GM12878 (cell line): ENCODE measurements at regions of chr3 and their contacts with region 1.

Region 1: DNA sequence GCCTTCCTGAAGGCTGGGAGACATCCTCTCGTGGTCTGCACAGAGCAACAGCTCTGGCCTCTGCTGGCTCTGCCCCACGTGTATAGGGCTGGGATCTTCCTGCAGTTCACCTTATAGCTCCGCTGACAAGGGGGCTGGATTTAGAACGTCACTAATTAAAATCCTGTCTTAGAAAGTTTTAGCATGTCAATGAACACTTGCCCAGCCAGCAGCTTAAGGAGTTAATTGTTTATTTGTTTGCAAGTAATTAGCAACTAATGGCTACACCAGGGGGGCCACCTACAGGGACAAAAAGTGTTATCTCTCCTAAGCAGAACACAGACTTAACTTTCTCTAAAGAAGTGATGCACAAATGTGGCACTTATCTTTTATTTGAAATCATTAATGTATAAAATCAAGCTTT is at the start of gene HESX1:
- DNase-seq: no peak
- ATAC-seq: peak; percentile 25; the same call in 1 of the 3 replicates
- H3K4me3 ChIP-seq: no peak within 1 kb of the TSS
- H3K27ac ChIP-seq: no peak within 1 kb of the TSS
- H3K4me1 ChIP-seq: no peaks in the 10 kb centered on the region
- H3K27me3 ChIP-seq: no peaks in the 10 kb centered on the region
- CTCF ChIP-seq: no peak
- EP300 ChIP-seq: no peak
- POLR2A ChIP-seq: no peak
- RAD21 ChIP-seq: no peak
- polyA plus RNA-seq, gene HESX1: 4.2 to 5.9 TPM

Region 2: GRCh38 chr3:57184526-57184925 is 15.4 kb before region 1 on chr3:
- CTCF ChIA-PET with region 1: interaction called, 5 read pairs
- POLR2A ChIA-PET with region 1: no interaction called
- RAD21 ChIA-PET with region 1: interaction called, 4 read pairs
- SMC1A ChIA-PET with region 1: interaction called, 10 read pairs
- in situ Hi-C with region 1: no loop called
- intact Hi-C with region 1: no loop called
- DNase-seq: no peak
- ATAC-seq: no peak
- H3K4me3 ChIP-seq: no peak overlapping the region
- H3K27ac ChIP-seq: no peak overlapping the region
- H3K4me1 ChIP-seq: no peaks in the 10 kb centered on the region
- H3K27me3 ChIP-seq: no peaks in the 10 kb centered on the region
- CTCF ChIP-seq: no peak
- EP300 ChIP-seq: no peak
- POLR2A ChIP-seq: no peak
- RAD21 ChIP-seq: no peak

Region 3: DNA sequence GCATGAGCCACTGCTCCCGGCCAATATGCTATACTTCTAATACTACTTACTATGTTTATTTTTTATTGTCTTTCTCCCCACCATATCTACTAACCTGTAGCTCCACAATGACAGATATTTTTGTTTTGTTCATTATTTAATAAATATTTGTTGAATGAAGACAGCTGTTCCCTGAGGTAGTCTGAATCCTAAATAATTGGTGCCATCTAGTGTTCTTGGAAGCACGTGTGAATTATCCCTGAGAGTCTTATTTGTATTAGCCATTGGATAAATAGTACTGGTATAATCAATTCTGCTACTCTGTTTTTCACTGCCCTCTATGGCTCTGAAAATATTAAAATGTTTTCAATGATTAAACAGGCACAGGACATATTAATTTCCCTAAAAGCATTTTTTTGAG is 22.0 kb after region 1 on chr3:
- CTCF ChIA-PET with region 1: interaction called, 4 read pairs
- POLR2A ChIA-PET with region 1: interaction called, 7 read pairs
- RAD21 ChIA-PET with region 1: interaction called, 13 read pairs
- SMC1A ChIA-PET with region 1: interaction called, 26 read pairs
- in situ Hi-C with region 1: no loop called
- intact Hi-C with region 1: no loop called
- DNase-seq: no peak
- ATAC-seq: no peak
- H3K4me3 ChIP-seq: no peak overlapping the region
- H3K27ac ChIP-seq: no peak overlapping the region
- H3K4me1 ChIP-seq: peaks cover 12% of the 10 kb centered on the region
- H3K27me3 ChIP-seq: no peaks in the 10 kb centered on the region
- CTCF ChIP-seq: peak in 1 of 3 experiments; percentile 19; a peak in 1 of 6 replicates
- EP300 ChIP-seq: no peak
- POLR2A ChIP-seq: no peak
- RAD21 ChIP-seq: 0 out of 2 replicates have a peak, but pooled peaks have one; percentile 1

Region 4: DNA sequence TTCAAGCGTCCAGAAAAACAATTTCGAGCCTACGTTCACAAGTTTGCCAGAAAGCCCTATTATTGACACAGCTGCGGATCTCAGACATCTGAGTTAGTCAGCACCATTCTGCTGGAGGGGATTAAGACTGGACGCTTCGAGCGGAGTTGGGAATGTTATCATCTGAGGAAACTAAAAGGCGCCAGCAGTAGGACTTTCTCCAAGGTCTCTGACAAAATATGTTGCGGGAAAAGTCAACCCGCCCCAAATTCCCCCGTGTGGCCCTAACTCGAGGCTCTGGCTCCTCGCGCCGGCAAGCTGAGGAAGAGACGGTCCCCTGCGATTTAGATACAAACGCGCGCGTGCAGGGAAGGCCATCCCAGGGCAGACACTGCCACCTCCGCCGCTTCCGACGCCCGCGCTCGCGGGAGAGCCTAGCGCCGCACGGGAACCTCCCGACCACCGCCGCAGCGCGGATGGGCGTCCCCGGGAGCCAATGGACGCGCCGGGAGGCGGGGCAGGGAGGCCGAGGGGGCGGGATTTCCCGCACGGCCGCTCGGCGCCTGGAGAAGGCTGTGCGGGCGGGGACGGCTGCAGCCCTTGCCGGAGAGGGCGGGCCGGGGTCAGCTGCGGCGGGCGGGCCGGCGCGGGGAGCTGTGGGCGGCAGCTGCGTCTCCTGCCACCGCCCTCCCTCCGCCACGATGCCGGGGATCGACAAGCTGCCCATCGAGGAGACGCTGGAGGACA is 27.5 kb after region 1 on chr3 and contains the start of gene APPL1:
- CTCF ChIA-PET with region 1: interaction called, 4 read pairs
- POLR2A ChIA-PET with region 1: interaction called, 11 read pairs
- RAD21 ChIA-PET with region 1: interaction called, 13 read pairs
- SMC1A ChIA-PET with region 1: interaction called, 26 read pairs
- in situ Hi-C with region 1: no loop called
- intact Hi-C with region 1: no loop called
- DNase-seq: peak; percentile 68
- ATAC-seq: peak; percentile 95
- H3K4me3 ChIP-seq: peak within 1 kb of the TSS; percentile 89
- H3K27ac ChIP-seq: peak within 1 kb of the TSS; percentile 74
- H3K4me1 ChIP-seq: peaks cover 17% of the 10 kb centered on the region
- H3K27me3 ChIP-seq: no peaks in the 10 kb centered on the region
- CTCF ChIP-seq: 0 out of 6 replicates have a peak, but pooled peaks of 1 of the 3 experiments have one; percentile 3
- EP300 ChIP-seq: no peak
- POLR2A ChIP-seq: peak; percentile 88
- RAD21 ChIP-seq: no peak
- polyA plus RNA-seq, gene APPL1: 15.0 to 16.6 TPM

Region 5: GRCh38 chr3:57234613-57235575 is 35.0 kb after region 1 on chr3:
- CTCF ChIA-PET with region 1: interaction called, 7 read pairs
- POLR2A ChIA-PET with region 1: interaction called, 6 read pairs
- RAD21 ChIA-PET with region 1: interaction called, 10 read pairs
- SMC1A ChIA-PET with region 1: interaction called, 8 read pairs
- in situ Hi-C with region 1: no loop called
- intact Hi-C with region 1: no loop called
- DNase-seq: no peak
- ATAC-seq: peak; percentile 89
- H3K4me3 ChIP-seq: peak overlapping the region; percentile 38; the same call in 1 of the 2 replicates
- H3K27ac ChIP-seq: peak overlapping the region; percentile 76
- H3K4me1 ChIP-seq: peaks cover 2% of the 10 kb centered on the region; the same call in 1 of the 2 replicates
- H3K27me3 ChIP-seq: no peaks in the 10 kb centered on the region
- CTCF ChIP-seq: no peak
- EP300 ChIP-seq: no peak
- POLR2A ChIP-seq: no peak
- RAD21 ChIP-seq: no peak